Activated CD4-positive, alpha-beta memory T cell treated with anti-CD3 and anti-CD28 coated beads for 36 hours (primary cell): ENCODE measurements at regions of chr17 and their contacts with region 1.

Region 1: GRCh38 chr17:57130761-57131461 is 45.9 kb downstream of the AKAP1 start:
- DNase-seq: peak; percentile 86
- H3K4me3 Mint-ChIP-seq: no peak overlapping the region
- H3K27ac Mint-ChIP-seq: no peak overlapping the region
- H3K4me1 Mint-ChIP-seq: peaks cover 4% of the 10 kb centered on the region
- H3K27me3 Mint-ChIP-seq: no peaks in the 10 kb centered on the region

Region 2: DNA sequence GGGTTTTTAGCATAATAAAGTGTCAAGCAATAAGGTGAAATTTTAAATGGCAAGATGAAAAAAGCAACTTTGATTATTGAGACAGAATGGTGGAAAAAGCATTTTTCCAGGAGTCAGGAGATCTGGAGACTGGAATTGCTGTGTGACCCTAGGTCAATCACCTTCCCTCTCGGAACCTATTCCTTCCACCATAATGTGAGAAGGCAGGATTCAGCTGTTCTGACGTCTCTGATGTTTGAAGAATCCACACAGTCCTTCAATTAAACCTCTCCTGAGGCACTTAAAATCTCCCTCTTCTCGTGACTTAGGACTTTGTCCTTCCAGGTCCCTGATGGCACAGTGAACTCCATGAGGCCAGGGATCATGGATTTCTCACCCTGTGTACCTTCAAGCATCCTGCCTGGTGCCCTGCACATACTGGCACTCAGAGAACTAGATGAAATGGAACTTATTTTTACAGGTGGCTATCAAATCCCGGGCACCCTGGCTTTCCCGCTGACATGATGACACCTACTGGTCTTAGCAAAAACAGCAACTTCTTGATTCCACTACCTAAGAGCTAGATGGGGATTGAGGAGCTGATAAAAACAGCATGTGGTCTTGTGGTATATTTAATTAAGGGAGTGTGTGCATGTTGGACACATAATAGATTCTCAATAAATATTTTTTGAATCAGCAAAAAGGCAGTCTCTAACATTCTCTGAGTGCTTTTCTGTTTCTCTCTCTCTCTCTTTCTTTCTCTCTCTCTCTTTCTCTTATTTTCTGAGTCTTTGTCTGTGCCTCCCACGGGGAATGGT is 616.5 kb after region 1 on chr17:
- CTCF ChIA-PET with region 1: interaction called, 7 read pairs
- POLR2A ChIA-PET with region 1: no interaction called
- intact Hi-C with region 1: loop called (anchors 1 kb)
- DNase-seq: peak; percentile 53
- H3K4me3 Mint-ChIP-seq: no peak overlapping the region
- H3K27ac Mint-ChIP-seq: no peak overlapping the region
- H3K4me1 Mint-ChIP-seq: no peaks in the 10 kb centered on the region
- H3K27me3 Mint-ChIP-seq: peaks cover 2% of the 10 kb centered on the region

Region 3: GRCh38 chr17:57833179-57833939 is 702.4 kb after region 1 on chr17:
- CTCF ChIA-PET with region 1: interaction called, 16 read pairs
- POLR2A ChIA-PET with region 1: no interaction called
- intact Hi-C with region 1: loop called (anchors 10 kb)
- DNase-seq: peak; percentile 73
- H3K4me3 Mint-ChIP-seq: no peak overlapping the region
- H3K27ac Mint-ChIP-seq: no peak overlapping the region
- H3K4me1 Mint-ChIP-seq: peaks cover 6% of the 10 kb centered on the region
- H3K27me3 Mint-ChIP-seq: no peaks in the 10 kb centered on the region

Region 4: GRCh38 chr17:58112970-58113631 is 982.2 kb after region 1 on chr17:
- CTCF ChIA-PET with region 1: no interaction called
- POLR2A ChIA-PET with region 1: no interaction called
- intact Hi-C with region 1: loop called (anchors 2 kb)
- DNase-seq: peak; percentile 89
- H3K4me3 Mint-ChIP-seq: no peak overlapping the region
- H3K27ac Mint-ChIP-seq: no peak overlapping the region
- H3K4me1 Mint-ChIP-seq: peaks cover 4% of the 10 kb centered on the region
- H3K27me3 Mint-ChIP-seq: peaks cover 2% of the 10 kb centered on the region